HEK293 (cell line): ENCODE measurements at regions of chr9 and their contacts with region 1.

Region 1: GRCh38 chr9:71628247-71628646 is 140.1 kb downstream of the CEMIP2 start:
- H3K4me3 ChIP-seq: no peak overlapping the region
- H3K27ac ChIP-seq: no peak overlapping the region
- H3K4me1 ChIP-seq: no peaks in the 10 kb centered on the region
- CTCF ChIP-seq: no peak

Region 2: DNA sequence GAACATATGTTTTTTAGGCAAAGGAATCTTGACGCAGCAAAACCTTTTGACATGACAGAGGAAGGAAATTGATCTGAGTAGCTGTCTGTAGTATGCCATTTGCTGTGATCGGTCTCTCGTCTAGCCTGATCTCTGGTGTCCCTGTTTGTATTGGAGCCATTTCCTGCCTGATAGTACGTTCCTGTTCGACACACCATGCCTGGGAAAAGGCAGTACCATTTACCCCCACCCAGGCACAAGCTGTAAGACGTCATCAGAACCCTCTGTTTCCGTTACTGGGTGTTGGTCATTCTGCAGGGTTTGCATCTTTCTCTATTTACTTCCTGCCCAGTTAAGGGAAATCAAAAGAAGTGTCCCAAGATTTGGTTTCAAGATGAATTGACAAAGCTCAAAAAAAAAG is 10.4 kb after region 1 on chr9:
- CTCF ChIA-PET with region 1: interaction called, 10 read pairs
- POLR2A ChIA-PET with region 1: no interaction called
- H3K4me3 ChIP-seq: no peak overlapping the region
- H3K27ac ChIP-seq: no peak overlapping the region
- H3K4me1 ChIP-seq: no peaks in the 10 kb centered on the region
- CTCF ChIP-seq: no peak

Region 3: DNA sequence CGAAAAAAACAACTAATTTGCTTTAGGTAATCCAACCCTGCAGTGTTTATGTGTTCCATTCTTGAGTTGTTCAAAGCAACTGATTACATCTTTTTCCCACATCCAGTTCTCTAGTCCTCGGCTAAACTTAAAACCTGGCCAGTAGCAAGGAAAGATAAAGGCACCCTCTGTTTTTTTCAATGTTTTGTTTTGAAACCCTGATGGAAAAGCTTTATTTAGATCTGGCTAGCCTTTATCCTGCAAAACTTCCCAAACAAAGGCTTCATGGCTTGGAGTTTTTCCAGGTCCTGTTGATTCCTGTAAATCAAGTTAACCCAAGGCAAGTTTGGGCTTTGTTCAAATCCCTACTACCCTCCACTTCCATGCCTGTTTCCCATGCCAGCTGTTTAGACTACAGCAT is 35.0 kb after region 1 on chr9:
- CTCF ChIA-PET with region 1: no interaction called
- POLR2A ChIA-PET with region 1: no interaction called
- H3K4me3 ChIP-seq: no peak overlapping the region
- H3K27ac ChIP-seq: no peak overlapping the region
- H3K4me1 ChIP-seq: no peaks in the 10 kb centered on the region
- CTCF ChIP-seq: no peak

Region 4: GRCh38 chr9:71683598-71684235 is 55.5 kb after region 1 on chr9:
- CTCF ChIA-PET with region 1: interaction called, 13 read pairs
- POLR2A ChIA-PET with region 1: no interaction called
- H3K4me3 ChIP-seq: no peak overlapping the region
- H3K27ac ChIP-seq: no peak overlapping the region
- H3K4me1 ChIP-seq: 0 out of 2 replicates have a peak, but pooled peaks cover 3% of the 10 kb centered on the region
- CTCF ChIP-seq: no peak

Region 5: DNA sequence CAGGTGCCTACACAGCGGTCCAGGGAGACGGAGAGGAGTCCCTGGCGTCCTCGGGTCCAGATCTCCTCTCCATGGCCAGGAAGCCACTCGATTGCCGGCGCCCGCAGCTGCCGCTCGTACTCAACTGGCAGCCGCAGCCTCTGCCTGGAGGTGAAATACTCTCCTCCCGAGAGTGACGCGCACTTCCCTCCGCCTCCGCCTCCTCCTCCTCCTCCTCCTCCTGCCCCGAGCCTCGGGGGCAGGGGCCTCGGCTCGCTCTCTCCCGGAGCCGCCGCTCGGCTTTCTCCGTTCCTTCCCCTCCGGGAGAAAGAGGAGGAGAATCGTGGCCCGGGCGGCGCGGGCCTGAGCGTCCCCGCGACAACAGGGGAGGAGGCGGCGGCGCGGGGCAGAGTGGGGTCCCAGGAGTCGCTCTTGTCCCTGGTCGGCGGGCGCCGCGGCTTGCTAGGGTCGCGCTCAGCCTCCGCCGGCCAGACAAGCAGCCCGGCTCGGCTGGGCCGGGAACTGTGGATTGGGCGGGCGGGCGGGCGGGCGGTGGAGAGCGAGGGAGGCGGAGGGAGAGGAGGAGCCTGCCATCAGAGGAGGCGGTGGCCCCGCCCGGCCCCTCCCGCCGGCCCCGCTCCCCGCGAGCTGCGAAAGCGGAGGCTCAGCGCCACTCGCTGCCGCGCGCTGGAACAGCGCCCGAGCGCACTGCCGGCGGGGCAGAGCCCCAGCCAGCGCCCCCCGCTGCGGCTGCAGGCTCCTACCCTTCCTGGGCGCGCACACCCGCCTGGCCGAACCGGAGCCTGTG is 140.3 kb after region 1 on chr9 and contains the start of gene CEMIP2:
- CTCF ChIA-PET with region 1: interaction called, 13 read pairs
- POLR2A ChIA-PET with region 1: interaction called, 3 read pairs
- H3K4me3 ChIP-seq: peak within 1 kb of the TSS; percentile 92
- H3K27ac ChIP-seq: peak within 1 kb of the TSS; percentile 88
- H3K4me1 ChIP-seq: no peaks in the 10 kb centered on the region
- CTCF ChIP-seq: no peak